ENCODE measurements at regions of chr22 and their contacts with region 1.

Region 1: GRCh38 chr22:17785185-17786184 is 11.2 kb upstream of the BID start:
- DNase-seq: peak; percentile 34 to 80 (median 64)
- ATAC-seq: peak; percentile 40 to 60 (median 55)
- H3K4me3 ChIP-seq: no peak overlapping the region
- H3K4me3 Mint-ChIP-seq: no peak overlapping the region
- H3K27ac ChIP-seq: no peak overlapping the region
- H3K27ac Mint-ChIP-seq: no peak overlapping the region
- H3K4me1 ChIP-seq: peaks cover 2 to 47% of the 10 kb centered on the region in 2 experiments
- H3K4me1 Mint-ChIP-seq: peaks cover 19 to 26% (median 21%) of the 10 kb centered on the region in 3 donors
- H3K27me3 ChIP-seq: no peaks in the 10 kb centered on the region
- H3K27me3 Mint-ChIP-seq: no peaks in the 10 kb centered on the region

Region 2: GRCh38 chr22:17158568-17159503 is 626.6 kb before region 1 on chr22 and contains the start of gene HDHD5:
- CTCF ChIA-PET with region 1: interaction called in 1 of 2 experiments, 10 read pairs
- POLR2A ChIA-PET with region 1: no interaction called
- DNase-seq: peak; percentile 76 to 95 (median 84)
- ATAC-seq: peak; percentile 92 to 96 (median 94)
- H3K4me3 ChIP-seq: peak within 1 kb of the TSS; percentile 72 to 84
- H3K4me3 Mint-ChIP-seq: peak within 1 kb of the TSS; percentile 80 to 83 (median 82)
- H3K27ac ChIP-seq: peak within 1 kb of the TSS; percentile 49
- H3K27ac Mint-ChIP-seq: peak within 1 kb of the TSS; percentile 59 to 66
- H3K4me1 ChIP-seq: peaks cover 16 to 44% of the 10 kb centered on the region in 2 experiments
- H3K4me1 Mint-ChIP-seq: peaks cover 34 to 40% (median 35%) of the 10 kb centered on the region in 3 donors
- H3K27me3 ChIP-seq: peaks cover 0 to 2% of the 10 kb centered on the region in 2 experiments
- H3K27me3 Mint-ChIP-seq: no peaks in the 10 kb centered on the region
- total RNA-seq, gene HDHD5: 17.6 to 34.2 (median 30.1) TPM

Region 3: DNA sequence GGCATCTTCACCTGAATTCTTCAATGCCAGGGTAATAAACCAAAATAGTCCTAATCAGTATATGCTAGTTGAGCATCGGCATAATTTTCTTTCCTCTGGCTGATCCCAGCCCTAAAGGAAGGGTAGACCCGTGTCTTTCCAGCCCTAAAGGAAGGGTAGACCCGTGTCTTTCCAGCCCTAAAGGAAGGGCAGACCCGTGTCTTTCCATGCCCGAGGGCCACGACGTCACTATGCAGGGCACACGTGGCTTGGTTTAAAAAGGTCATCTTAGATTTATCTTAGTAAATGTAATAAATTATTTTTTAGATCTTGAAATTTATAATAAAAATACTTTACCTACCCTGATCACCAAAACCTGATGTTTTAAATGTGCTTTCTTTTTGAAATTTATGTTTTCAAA is 56.7 kb before region 1 on chr22:
- CTCF ChIA-PET with region 1: no interaction called
- POLR2A ChIA-PET with region 1: no interaction called
- DNase-seq: no peak
- ATAC-seq: no peak
- H3K4me3 ChIP-seq: no peak overlapping the region
- H3K4me3 Mint-ChIP-seq: no peak overlapping the region
- H3K27ac ChIP-seq: no peak overlapping the region
- H3K27ac Mint-ChIP-seq: peak overlapping the region in 1 of 2 donors; percentile 54
- H3K4me1 ChIP-seq: peaks cover 5 to 9% of the 10 kb centered on the region in 2 experiments
- H3K4me1 Mint-ChIP-seq: peaks cover 14 to 28% (median 17%) of the 10 kb centered on the region in 3 donors
- H3K27me3 ChIP-seq: no peaks in the 10 kb centered on the region
- H3K27me3 Mint-ChIP-seq: no peaks in the 10 kb centered on the region

Region 4: DNA sequence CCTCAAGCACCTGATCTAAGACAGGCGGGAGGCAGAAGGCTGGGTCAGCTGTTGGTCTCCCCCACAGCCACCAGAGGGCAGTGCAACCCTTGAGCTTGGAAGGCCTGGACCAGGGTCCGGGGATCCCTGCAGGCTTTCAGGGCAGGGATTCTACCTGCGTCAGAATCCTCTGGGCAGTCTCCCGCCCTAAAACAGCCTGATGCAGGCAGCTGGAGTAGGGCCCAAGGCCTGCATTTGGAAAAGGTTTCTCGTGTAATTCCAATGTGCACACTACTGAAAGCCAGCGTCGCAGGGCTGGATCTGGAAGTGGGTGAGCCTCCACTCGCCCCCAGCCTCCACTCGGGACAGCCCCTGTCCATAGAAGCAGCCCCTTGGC is 43.0 kb before region 1 on chr22:
- CTCF ChIA-PET with region 1: interaction called, 8 to 10 read pairs
- POLR2A ChIA-PET with region 1: interaction called in 1 of 2 experiments, 3 read pairs
- DNase-seq: peak; percentile 19 to 80 (median 55)
- ATAC-seq: peak; percentile 66 to 79 (median 76)
- H3K4me3 ChIP-seq: no peak overlapping the region
- H3K4me3 Mint-ChIP-seq: no peak overlapping the region
- H3K27ac ChIP-seq: no peak overlapping the region
- H3K27ac Mint-ChIP-seq: no peak overlapping the region
- H3K4me1 ChIP-seq: peaks cover 0 to 8% of the 10 kb centered on the region in 2 experiments
- H3K4me1 Mint-ChIP-seq: peaks cover 0 to 7% (median 6%) of the 10 kb centered on the region in 3 donors
- H3K27me3 ChIP-seq: no peaks in the 10 kb centered on the region
- H3K27me3 Mint-ChIP-seq: no peaks in the 10 kb centered on the region

Region 5: DNA sequence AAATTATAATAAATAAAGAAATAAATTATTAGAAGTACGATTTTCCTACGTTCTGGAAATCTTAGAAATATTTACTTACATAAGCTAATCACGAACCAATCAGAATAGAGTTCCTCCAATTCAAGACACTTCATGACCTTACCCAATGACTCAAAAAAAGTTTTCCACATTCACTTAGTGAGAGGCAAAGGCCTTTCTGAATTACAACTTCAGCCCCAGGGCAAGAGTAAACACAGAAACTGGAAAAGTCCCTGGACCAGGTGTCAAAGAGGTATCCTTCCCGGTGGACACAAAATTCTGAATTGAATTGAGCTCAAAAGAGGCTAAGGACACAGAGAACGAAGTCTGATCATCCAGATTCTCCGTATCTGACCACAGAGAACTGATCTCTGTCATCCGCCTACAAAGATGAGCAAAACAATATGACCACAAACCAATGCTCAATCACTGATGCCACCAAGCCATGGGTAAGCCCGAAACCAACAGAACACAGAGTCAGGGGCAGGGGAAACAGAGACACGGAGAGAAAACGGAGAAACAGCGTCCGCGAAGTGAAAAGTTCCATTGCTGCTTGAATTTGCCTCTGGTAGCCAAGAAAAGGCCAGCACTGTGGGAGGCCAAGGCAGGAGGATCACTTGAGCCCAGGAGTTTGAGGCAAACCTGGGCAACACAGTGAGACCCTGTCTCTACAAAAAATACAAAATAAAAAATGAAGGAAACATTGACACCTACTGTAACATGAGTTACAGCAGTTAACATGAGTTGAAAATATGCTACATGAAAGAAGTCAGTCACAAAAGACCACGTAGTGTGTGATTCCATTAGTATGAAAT is 18.0 kb before region 1 on chr22:
- CTCF ChIA-PET with region 1: interaction called in 1 of 2 experiments, 11 read pairs
- POLR2A ChIA-PET with region 1: no interaction called
- DNase-seq: peak in 28 of 35 experiments; percentile 19 to 71 (median 44)
- ATAC-seq: peak; percentile 81 to 93 (median 87)
- H3K4me3 ChIP-seq: peak overlapping the region in 1 of 2 donors; percentile 23
- H3K4me3 Mint-ChIP-seq: peak overlapping the region; percentile 49 to 68 (median 66)
- H3K27ac ChIP-seq: peak overlapping the region; percentile 21
- H3K27ac Mint-ChIP-seq: peak overlapping the region; percentile 79 to 87
- H3K4me1 ChIP-seq: peaks cover 13 to 64% of the 10 kb centered on the region in 2 experiments
- H3K4me1 Mint-ChIP-seq: peaks cover 63 to 67% (median 64%) of the 10 kb centered on the region in 3 donors
- H3K27me3 ChIP-seq: no peaks in the 10 kb centered on the region
- H3K27me3 Mint-ChIP-seq: no peaks in the 10 kb centered on the region

Measured in T-cell (primary cell).